ENCODE measurements at regions of chr5 and their contacts with region 1.

Region 1: DNA sequence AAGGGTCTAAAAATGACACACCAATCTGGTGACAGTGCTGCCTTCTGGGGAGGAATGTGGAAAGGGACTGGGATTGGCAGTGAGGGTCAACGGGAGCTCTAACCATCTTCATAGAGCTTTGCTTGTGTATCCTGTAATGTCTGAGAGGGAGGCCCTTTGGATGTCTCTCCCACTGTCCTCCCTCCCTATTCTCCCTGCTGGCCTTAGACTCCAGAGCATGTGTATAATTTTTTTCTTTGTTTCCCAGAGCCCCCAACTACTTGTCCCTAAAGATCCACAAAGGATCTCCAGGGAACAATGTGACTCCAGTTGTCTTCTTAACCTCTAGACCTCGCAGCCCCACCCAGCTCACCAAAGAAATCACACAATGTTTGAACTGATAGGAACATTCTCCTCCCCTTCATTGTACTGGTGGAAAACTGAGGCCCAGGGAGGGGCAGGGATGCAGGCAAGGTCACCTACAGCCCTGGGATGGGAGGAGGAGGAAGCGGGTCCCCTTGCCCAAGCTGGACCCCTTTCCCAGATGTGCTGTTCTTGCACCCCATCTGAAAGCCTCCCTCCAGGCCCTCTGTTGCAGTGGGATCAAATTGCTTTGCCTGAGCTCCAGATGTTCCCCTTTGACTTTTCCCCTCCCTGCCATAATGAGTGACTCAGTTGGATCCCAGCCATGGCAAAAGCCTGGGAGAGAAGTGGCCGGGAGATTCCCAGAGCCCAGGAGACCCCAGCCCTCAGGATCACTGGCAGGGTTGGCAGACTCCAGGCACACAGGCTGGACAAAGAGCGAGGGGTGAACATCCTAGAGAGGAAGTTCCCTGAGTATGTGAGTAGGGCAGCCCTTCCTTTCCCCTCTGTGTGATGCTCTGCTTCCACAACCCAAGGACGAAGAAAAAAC is 21.8 kb downstream of the SPARC start:
- DNase-seq: no peak
- H3K4me3 Mint-ChIP-seq: no peak overlapping the region
- H3K27ac Mint-ChIP-seq: no peak overlapping the region
- H3K4me1 Mint-ChIP-seq: peaks cover 20% of the 10 kb centered on the region
- H3K27me3 Mint-ChIP-seq: peaks cover 12% of the 10 kb centered on the region
- CTCF ChIP-seq: no peak

Region 2: DNA sequence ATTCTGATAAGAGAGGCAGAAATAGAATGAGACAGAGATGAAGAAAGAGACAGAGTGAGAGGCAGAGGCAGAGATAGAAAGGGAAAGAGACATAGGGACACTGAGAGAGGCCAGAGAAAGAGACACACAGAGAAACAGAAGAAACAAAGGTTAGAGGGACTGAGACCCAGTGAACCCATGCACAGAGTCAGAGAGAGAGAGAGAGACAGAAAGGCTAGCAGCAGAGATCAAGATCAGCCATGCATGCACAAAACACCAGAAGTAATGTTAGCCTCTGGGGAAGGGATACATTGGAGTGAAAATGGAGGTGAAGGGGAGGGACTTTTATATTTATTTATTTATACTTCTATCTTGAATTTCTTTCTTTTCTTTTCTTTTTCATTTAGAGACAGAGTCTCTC is 35.9 kb after region 1 on chr5:
- CTCF ChIA-PET with region 1: interaction called, 13 read pairs
- intact Hi-C with region 1: no loop called
- DNase-seq: no peak
- H3K4me3 Mint-ChIP-seq: no peak overlapping the region
- H3K27ac Mint-ChIP-seq: no peak overlapping the region
- H3K4me1 Mint-ChIP-seq: peaks cover 43% of the 10 kb centered on the region
- H3K27me3 Mint-ChIP-seq: no peaks in the 10 kb centered on the region
- CTCF ChIP-seq: no peak

Region 3: DNA sequence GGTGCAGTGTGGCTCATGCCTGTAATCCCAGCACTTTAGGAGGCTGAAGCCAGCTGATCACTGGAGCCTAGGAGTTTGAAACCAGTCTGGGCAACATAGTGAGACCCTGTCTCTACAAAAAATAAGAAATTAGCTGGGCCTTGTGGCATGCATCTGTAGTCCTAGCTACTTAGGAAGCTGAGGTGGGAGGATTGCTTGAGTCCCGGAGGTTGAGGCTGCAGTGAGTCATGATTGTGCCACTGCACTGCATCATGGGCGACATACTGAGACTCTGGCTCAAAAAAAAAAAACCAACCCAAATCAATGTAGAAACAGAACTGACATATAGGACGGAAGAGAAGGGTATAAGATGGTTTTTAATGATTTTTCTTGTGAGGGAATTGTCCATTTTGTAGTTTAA is 134.5 kb after region 1 on chr5:
- CTCF ChIA-PET with region 1: interaction called, 12 read pairs
- intact Hi-C with region 1: no loop called
- DNase-seq: no peak
- H3K4me3 Mint-ChIP-seq: no peak overlapping the region
- H3K27ac Mint-ChIP-seq: peak overlapping the region; percentile 17
- H3K4me1 Mint-ChIP-seq: peaks cover 9% of the 10 kb centered on the region
- H3K27me3 Mint-ChIP-seq: no peaks in the 10 kb centered on the region
- CTCF ChIP-seq: no peak

Measured in Calu3 (cell line).